ENCODE measurements at regions of chr1 and their contacts with region 1.

Region 1: GRCh38 chr1:115706587-115707425 is 61.7 kb downstream of the CASQ2 start:
- DNase-seq: peak; percentile 39
- H3K4me3 ChIP-seq: no peak overlapping the region
- H3K27ac ChIP-seq: no peak overlapping the region
- H3K4me1 ChIP-seq: no peaks in the 10 kb centered on the region
- H3K27me3 ChIP-seq: peaks cover 0 to 12% of the 10 kb centered on the region in 2 experiments
- CTCF ChIP-seq: peak; percentile 52 to 55
- POLR2A ChIP-seq: no peak

Region 2: DNA sequence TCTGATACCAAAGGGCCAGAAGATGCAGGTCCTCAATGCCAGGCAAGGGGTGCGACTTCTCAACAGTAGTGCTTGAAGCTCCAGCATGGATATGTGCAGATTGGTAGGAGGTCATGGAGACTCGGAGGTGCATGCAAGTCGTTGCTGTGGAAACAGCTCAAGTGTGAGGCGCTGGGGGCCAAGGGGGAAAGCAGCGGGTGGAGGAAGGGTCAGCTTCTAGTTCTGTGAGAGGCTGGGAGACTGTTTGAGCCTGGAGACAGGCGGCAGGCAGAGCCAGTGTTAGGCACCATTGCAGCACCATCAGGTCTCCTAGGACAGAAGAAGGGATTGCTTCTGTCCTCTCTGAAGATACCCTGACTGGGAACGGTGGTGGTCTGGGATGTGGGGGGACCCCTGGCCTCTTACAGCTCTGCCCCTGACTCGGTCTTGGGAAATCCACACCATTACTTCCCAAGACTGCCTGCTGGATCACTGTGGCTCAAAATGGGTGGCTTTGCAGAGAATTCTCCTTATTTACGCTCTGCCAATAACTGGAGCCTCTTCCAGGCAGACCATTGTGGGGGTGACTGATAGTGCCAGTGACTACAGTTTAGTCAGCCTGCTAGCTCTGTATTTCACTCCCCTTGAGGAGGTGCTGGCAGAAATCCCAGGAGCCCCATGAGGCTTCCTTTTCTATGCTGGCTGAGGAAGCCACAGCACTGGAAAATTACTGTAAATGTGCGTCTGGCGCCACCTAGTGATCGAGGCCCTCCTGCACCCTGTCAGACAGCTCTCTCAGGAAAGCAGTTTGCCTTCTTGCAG is 111.3 kb before region 1 on chr1:
- CTCF ChIA-PET with region 1: interaction called, 14 read pairs
- POLR2A ChIA-PET with region 1: no interaction called
- dilution Hi-C with region 1: no loop called
- intact Hi-C with region 1: no loop called
- DNase-seq: peak; percentile 80
- H3K4me3 ChIP-seq: no peak overlapping the region
- H3K27ac ChIP-seq: no peak overlapping the region
- H3K4me1 ChIP-seq: no peaks in the 10 kb centered on the region
- H3K27me3 ChIP-seq: peaks cover 0 to 6% of the 10 kb centered on the region in 2 experiments
- CTCF ChIP-seq: peak; percentile 91 to 95
- POLR2A ChIP-seq: no peak

Region 3: GRCh38 chr1:115642168-115643072 is 64.4 kb before region 1 on chr1:
- CTCF ChIA-PET with region 1: interaction called, 47 read pairs
- POLR2A ChIA-PET with region 1: no interaction called
- dilution Hi-C with region 1: no loop called
- intact Hi-C with region 1: loop called (anchors 5 kb)
- DNase-seq: peak; percentile 46
- H3K4me3 ChIP-seq: peak overlapping the region; percentile 54 to 86 (median 71)
- H3K27ac ChIP-seq: peak overlapping the region; percentile 37
- H3K4me1 ChIP-seq: peaks cover 16% of the 10 kb centered on the region
- H3K27me3 ChIP-seq: peaks cover 0 to 6% of the 10 kb centered on the region in 2 experiments
- CTCF ChIP-seq: no peak
- POLR2A ChIP-seq: no peak

Region 4: DNA sequence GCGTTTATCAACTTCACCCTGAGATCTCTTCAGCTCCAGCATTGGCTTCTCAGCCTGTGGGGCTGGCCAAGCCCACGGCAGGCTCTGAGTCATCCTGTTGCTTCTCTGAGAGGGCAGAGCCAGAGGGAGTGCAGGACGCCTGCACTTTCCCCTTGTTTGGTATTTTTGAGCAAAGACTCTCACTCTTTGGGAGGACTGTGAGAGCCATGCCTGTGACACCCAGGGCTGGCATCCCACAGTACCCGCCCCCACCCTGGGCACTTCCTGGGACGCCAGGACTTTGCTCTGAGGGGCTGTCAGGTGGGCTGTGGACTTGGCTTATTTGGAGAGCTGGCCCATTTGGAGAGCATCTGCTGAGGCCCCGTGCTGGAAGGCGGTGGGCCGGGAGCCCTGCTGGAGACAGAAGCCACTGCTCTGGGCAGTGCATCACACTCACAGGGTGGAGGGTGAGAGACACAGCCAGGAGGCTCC is 27.6 kb before region 1 on chr1:
- CTCF ChIA-PET with region 1: interaction called, 13 read pairs
- POLR2A ChIA-PET with region 1: no interaction called
- dilution Hi-C with region 1: no loop called
- intact Hi-C with region 1: no loop called
- DNase-seq: no peak
- H3K4me3 ChIP-seq: no peak overlapping the region
- H3K27ac ChIP-seq: no peak overlapping the region
- H3K4me1 ChIP-seq: no peaks in the 10 kb centered on the region
- H3K27me3 ChIP-seq: no peaks in the 10 kb centered on the region
- CTCF ChIP-seq: no peak
- POLR2A ChIP-seq: no peak

Region 5: GRCh38 chr1:115727706-115728249 is 21.0 kb after region 1 on chr1:
- CTCF ChIA-PET with region 1: interaction called, 20 read pairs
- POLR2A ChIA-PET with region 1: no interaction called
- dilution Hi-C with region 1: no loop called
- intact Hi-C with region 1: no loop called
- DNase-seq: no peak
- H3K4me3 ChIP-seq: no peak overlapping the region
- H3K27ac ChIP-seq: no peak overlapping the region
- H3K4me1 ChIP-seq: no peaks in the 10 kb centered on the region
- H3K27me3 ChIP-seq: no peaks in the 10 kb centered on the region
- CTCF ChIP-seq: no peak
- POLR2A ChIP-seq: no peak

Region 6: DNA sequence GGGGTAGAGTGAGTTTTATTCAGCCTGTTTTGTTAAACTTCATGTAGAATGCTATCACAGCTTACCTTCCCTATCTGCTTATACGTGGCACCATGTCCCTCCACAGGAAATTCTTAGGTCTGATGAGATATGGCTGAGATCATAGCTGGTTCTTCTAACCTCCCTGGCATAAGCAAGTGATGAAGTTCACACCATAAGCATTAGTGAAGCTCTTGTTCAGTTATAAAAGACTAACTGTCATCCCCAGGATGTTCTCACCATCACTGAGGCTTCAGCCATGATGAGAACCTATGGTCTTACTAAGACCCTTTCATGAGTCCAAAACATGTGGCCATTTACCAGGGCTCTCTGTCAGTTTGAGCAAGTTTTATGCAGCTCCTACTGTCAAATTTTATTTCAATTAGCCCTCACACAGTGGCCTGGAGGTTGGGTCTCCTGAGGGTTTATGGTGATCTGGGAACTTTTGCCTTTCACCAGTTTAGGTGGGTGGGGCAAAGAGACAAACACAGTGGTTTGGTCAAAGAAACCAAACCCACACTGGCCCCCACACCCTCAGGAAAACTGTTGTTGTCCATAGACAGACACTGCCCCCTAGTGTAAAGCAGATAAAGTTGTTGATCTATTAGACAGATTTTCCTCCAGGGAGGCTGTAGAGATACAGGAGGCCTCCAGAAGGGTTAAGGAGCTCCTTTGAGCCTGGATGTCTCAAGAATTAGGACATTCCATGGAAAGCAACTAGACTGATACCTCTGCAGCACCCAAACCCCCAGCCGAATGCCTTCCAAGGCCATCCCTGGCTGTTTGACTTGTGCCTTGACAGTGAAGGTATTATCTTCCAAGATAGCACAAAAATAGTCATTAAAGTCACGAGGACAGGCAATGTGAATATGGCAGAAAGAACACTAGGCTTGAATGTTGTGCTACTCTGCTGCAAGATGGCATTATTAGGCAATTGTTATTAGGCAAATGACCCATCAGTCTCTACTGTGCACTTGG is 274.5 kb after region 1 on chr1:
- CTCF ChIA-PET with region 1: interaction called, 14 read pairs
- POLR2A ChIA-PET with region 1: no interaction called
- dilution Hi-C with region 1: no loop called
- intact Hi-C with region 1: no loop called
- DNase-seq: peak; percentile 41
- H3K4me3 ChIP-seq: no peak overlapping the region
- H3K27ac ChIP-seq: no peak overlapping the region
- H3K4me1 ChIP-seq: no peaks in the 10 kb centered on the region
- H3K27me3 ChIP-seq: peaks cover 17 to 39% of the 10 kb centered on the region in 2 experiments
- CTCF ChIP-seq: peak; percentile 53 to 56
- POLR2A ChIP-seq: no peak

Region 7: DNA sequence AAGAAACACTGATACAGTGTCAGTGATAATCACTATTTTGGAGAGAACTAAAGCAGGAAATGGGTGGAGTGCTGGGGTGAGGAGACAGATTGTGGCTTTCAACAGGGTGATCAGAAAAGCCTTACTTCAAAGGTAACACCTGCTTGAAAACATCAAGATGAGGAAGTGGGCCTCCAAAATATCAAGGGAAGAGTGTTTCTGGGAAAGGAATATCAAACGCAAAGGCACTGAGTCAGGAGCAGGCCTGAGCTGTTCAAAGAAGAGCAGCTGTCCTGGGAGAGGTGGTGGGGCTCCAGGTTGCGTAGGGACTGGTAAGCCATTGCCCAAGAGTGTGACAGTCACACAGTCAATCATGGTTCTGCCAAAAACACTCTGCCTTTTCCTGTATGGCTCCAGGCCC is 619.1 kb after region 1 on chr1:
- CTCF ChIA-PET with region 1: no interaction called
- POLR2A ChIA-PET with region 1: no interaction called
- dilution Hi-C with region 1: no loop called
- intact Hi-C with region 1: no loop called
- DNase-seq: no peak
- H3K4me3 ChIP-seq: no peak overlapping the region
- H3K27ac ChIP-seq: no peak overlapping the region
- H3K4me1 ChIP-seq: peaks cover 6% of the 10 kb centered on the region
- H3K27me3 ChIP-seq: no peaks in the 10 kb centered on the region
- CTCF ChIP-seq: no peak
- POLR2A ChIP-seq: no peak

Measured in endothelial cell of umbilical vein (primary cell).